ENCODE measurements at regions of chr5 and their contacts with region 1.

Region 1: GRCh38 chr5:109409844-109410388 is at the start of gene PJA2:
- DNase-seq: peak; percentile 89 to 99 (median 96)
- ATAC-seq: peak; percentile 76
- H3K4me3 ChIP-seq: peak within 1 kb of the TSS; percentile 73 to 88
- H3K4me3 Mint-ChIP-seq: peak within 1 kb of the TSS; percentile 98
- H3K27ac ChIP-seq: peak within 1 kb of the TSS; percentile 90 to 98
- H3K27ac Mint-ChIP-seq: peak within 1 kb of the TSS; percentile 97
- H3K4me1 ChIP-seq: peaks cover 19% of the 10 kb centered on the region
- H3K4me1 Mint-ChIP-seq: peaks cover 47% of the 10 kb centered on the region
- H3K27me3 ChIP-seq: no peaks in the 10 kb centered on the region
- H3K27me3 Mint-ChIP-seq: no peaks in the 10 kb centered on the region
- CTCF ChIP-seq: peak; percentile 39
- total RNA-seq, gene PJA2: 89.3 to 94.4 TPM

Region 2: DNA sequence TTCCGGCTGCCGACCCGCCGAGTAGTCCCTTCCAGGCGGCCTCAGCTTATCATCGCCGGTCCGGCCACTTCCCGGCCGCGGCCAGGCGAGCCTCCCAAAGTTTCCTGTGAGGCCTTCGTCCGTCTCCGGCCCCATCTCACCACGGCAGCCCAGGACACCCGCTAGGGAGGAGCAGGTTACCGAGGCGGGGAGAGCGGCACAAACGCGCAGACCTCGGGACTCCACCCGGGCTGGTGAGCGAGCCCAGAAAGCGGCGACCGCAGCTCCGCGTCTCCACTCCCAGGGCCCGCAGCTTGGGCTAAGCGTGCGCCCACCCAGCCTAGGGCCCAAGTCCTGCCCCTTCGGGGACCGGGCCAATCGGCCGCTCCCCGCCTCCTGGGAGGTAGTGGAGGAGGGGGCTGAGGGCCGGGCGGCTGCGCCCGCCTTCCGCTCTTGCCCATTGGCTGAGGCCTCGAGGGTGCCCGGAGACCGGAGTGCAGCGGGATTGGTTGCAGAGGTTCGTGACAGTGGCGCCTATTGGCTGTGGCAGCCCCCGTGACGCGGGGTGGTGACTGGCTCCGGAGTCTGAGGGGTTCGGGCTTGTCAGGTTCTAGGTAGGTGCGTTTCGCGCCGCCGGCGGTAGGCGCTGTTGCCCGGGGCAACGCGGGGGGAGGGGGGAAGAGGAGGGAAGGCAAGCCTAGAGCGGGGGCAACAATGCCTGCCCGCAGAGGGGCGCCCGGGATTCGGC is 661.4 kb before region 1 on chr5:
- CTCF ChIA-PET with region 1: no interaction called
- POLR2A ChIA-PET with region 1: interaction called, 5 read pairs
- intact Hi-C with region 1: loop called (anchors 1 to 5 kb)
- DNase-seq: peak; percentile 95 to 99 (median 98)
- ATAC-seq: peak; percentile 90
- H3K4me3 ChIP-seq: peak overlapping the region; percentile 86 to 98
- H3K4me3 Mint-ChIP-seq: peak overlapping the region; percentile 87
- H3K27ac ChIP-seq: peak overlapping the region; percentile 82 to 88
- H3K27ac Mint-ChIP-seq: peak overlapping the region; percentile 96
- H3K4me1 ChIP-seq: no peaks in the 10 kb centered on the region
- H3K4me1 Mint-ChIP-seq: peaks cover 12% of the 10 kb centered on the region
- H3K27me3 ChIP-seq: no peaks in the 10 kb centered on the region
- H3K27me3 Mint-ChIP-seq: peaks cover 2% of the 10 kb centered on the region
- CTCF ChIP-seq: no peak

Region 3: GRCh38 chr5:109388407-109388806 is 21.5 kb before region 1 on chr5:
- CTCF ChIA-PET with region 1: no interaction called
- POLR2A ChIA-PET with region 1: interaction called, 4 read pairs
- intact Hi-C with region 1: loop called in 1 of 2 experiments (anchors 1 kb)
- DNase-seq: no peak
- ATAC-seq: no peak
- H3K4me3 ChIP-seq: no peak overlapping the region
- H3K4me3 Mint-ChIP-seq: peak overlapping the region; percentile 21
- H3K27ac ChIP-seq: no peak overlapping the region
- H3K27ac Mint-ChIP-seq: peak overlapping the region; percentile 3
- H3K4me1 ChIP-seq: peaks cover 36% of the 10 kb centered on the region
- H3K4me1 Mint-ChIP-seq: peaks cover 84% of the 10 kb centered on the region
- H3K27me3 ChIP-seq: no peaks in the 10 kb centered on the region
- H3K27me3 Mint-ChIP-seq: no peaks in the 10 kb centered on the region
- CTCF ChIP-seq: no peak

Region 4: GRCh38 chr5:109688971-109689739 is 279.2 kb after region 1 on chr5:
- CTCF ChIA-PET with region 1: no interaction called
- POLR2A ChIA-PET with region 1: interaction called, 30 read pairs
- intact Hi-C with region 1: loop called (anchors 1 to 2 kb)
- DNase-seq: peak; percentile 50 to 94 (median 74)
- ATAC-seq: peak; percentile 71
- H3K4me3 ChIP-seq: peak overlapping the region; percentile 81 to 93
- H3K4me3 Mint-ChIP-seq: peak overlapping the region; percentile 87
- H3K27ac ChIP-seq: peak overlapping the region; percentile 88 to 93
- H3K27ac Mint-ChIP-seq: peak overlapping the region; percentile 88
- H3K4me1 ChIP-seq: peaks cover 26% of the 10 kb centered on the region
- H3K4me1 Mint-ChIP-seq: peaks cover 32% of the 10 kb centered on the region
- H3K27me3 ChIP-seq: no peaks in the 10 kb centered on the region
- H3K27me3 Mint-ChIP-seq: no peaks in the 10 kb centered on the region
- CTCF ChIP-seq: no peak

Region 5: GRCh38 chr5:110054240-110054639 is 644.3 kb after region 1 on chr5:
- CTCF ChIA-PET with region 1: no interaction called
- POLR2A ChIA-PET with region 1: no interaction called
- intact Hi-C with region 1: loop called in 1 of 2 experiments (anchors 5 kb)
- DNase-seq: peak; percentile 46 to 95 (median 71)
- ATAC-seq: peak; percentile 93
- H3K4me3 ChIP-seq: no peak overlapping the region
- H3K4me3 Mint-ChIP-seq: peak overlapping the region; percentile 24
- H3K27ac ChIP-seq: peak overlapping the region in 1 of 2 experiments; percentile 44
- H3K27ac Mint-ChIP-seq: peak overlapping the region; percentile 85
- H3K4me1 ChIP-seq: peaks cover 29% of the 10 kb centered on the region
- H3K4me1 Mint-ChIP-seq: peaks cover 43% of the 10 kb centered on the region
- H3K27me3 ChIP-seq: no peaks in the 10 kb centered on the region
- H3K27me3 Mint-ChIP-seq: no peaks in the 10 kb centered on the region
- CTCF ChIP-seq: peak; percentile 62

Region 6: DNA sequence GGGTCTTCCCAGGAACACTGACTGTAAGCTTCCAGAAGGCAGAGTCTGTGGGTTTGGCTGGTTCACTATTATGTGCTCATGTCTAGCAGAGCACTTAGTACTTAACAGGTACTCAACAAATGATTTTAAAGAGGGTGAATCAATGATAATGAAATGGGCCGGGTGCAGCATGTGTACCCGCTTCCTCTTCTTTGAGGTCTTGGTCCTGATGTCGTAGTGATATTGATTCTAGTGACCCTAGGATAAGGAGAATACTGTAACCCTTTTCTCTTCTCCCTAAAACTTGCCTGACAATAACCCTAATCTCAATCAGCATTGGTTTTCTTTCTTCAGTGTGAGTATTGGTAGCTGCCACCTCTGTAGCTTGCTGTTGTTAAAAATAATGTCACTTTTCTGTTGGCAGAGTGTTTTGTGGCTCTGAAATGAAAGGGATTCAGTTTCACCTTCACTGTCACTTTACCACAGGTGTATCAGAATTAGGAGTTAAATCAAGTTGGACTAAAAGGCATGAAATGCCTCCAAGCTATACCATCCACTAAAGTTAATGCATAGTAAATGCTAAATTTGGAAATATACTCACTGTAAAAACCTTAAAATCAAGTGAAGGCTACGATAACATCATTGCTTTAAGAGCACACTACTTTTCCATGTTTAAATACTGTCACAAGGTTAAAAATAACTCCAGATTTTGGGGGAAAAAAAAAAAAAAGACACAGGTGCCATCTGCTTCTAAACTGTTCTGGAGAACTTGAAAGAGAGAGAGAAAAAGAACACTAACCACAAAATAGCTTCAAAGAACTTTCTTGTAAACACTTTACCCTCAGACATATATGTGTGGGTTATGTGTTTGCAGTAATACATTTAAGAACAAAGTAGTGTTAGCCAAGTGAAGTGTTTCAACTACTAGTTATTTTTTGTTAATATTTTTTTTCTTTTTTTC is 1820.2 kb after region 1 on chr5:
- CTCF ChIA-PET with region 1: no interaction called
- POLR2A ChIA-PET with region 1: no interaction called
- intact Hi-C with region 1: loop called in 1 of 2 experiments (anchors 10 kb)
- DNase-seq: peak in 2 of 9 experiments; percentile 67 to 83
- ATAC-seq: peak; percentile 36
- H3K4me3 ChIP-seq: peak overlapping the region; percentile 4 to 46
- H3K4me3 Mint-ChIP-seq: peak overlapping the region; percentile 79
- H3K27ac ChIP-seq: peak overlapping the region; percentile 31 to 72
- H3K27ac Mint-ChIP-seq: peak overlapping the region; percentile 99
- H3K4me1 ChIP-seq: peaks cover 75% of the 10 kb centered on the region
- H3K4me1 Mint-ChIP-seq: peaks cover 74% of the 10 kb centered on the region
- H3K27me3 ChIP-seq: no peaks in the 10 kb centered on the region
- H3K27me3 Mint-ChIP-seq: no peaks in the 10 kb centered on the region
- CTCF ChIP-seq: no peak